ENCODE measurements at regions of chr1 and their contacts with region 1.

Region 1: DNA sequence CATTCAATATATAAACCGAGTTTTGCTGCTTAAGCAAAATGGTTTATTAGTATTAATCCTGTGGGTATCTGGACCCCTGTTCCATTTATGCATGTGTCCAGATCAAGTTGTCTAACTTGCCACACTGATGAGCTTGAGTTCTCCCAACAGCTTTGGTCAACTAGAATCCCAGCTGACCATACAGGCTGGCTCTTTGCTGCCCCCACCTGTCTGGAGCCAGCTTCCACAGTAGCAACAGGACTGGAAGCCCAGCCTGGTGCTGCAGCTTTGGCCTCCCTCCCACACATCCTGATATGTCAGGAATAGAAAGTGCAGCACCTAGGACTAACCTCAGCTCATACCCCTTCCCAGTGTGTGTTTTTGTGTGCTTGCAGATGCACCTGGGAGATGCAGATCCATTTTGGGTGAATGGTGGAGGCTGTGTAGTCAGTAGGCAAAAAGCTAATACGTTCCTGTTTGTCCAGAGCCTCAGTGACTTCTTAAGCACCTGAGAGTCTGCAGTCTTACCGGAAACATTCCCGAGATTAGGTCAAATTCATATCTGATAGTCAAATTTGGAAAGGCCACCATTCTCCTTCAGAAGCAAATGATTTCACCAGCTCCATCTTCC is 40.9 kb upstream of the BEND5 start:
- DNase-seq: peak; percentile 18
- ATAC-seq: peak; percentile 93
- H3K4me3 ChIP-seq: no peak overlapping the region
- H3K27ac ChIP-seq: no peak overlapping the region
- H3K4me1 ChIP-seq: no peaks in the 10 kb centered on the region
- H3K27me3 ChIP-seq: no peaks in the 10 kb centered on the region
- CTCF ChIP-seq: peak; percentile 85
- EP300 ChIP-seq: no peak
- POLR2A ChIP-seq: no peak
- RAD21 ChIP-seq: 0 out of 2 replicates have a peak, but pooled peaks have one; percentile 32

Region 2: DNA sequence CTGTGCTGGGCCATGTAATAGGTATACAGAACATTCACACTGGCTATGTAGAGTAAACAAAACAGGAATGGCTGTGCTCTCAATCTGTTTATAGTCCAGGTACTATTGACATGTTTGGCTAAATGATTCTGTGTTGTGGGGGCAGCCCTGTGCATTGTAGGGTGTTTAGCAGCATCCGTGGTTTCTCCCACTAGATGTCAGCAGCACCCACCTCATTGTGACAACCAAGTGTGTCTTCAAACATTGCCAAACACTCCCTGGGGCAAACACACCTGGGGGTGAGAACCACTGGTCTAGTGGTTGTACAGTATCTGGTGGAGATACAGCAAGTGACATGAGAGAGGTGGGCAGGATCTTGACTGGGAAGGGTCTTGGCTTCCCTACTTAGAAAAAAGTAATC is 265.2 kb before region 1 on chr1:
- CTCF ChIA-PET with region 1: no interaction called
- POLR2A ChIA-PET with region 1: no interaction called
- in situ Hi-C with region 1: loop called (anchors 10 kb)
- intact Hi-C with region 1: no loop called
- DNase-seq: peak; percentile 11
- ATAC-seq: peak; percentile 88
- H3K4me3 ChIP-seq: no peak overlapping the region
- H3K27ac ChIP-seq: no peak overlapping the region
- H3K4me1 ChIP-seq: no peaks in the 10 kb centered on the region
- H3K27me3 ChIP-seq: peaks cover 0 to 3% of the 10 kb centered on the region in 2 experiments; a peak in 1 of 5 replicates
- CTCF ChIP-seq: peak; percentile 65
- EP300 ChIP-seq: no peak
- POLR2A ChIP-seq: no peak
- RAD21 ChIP-seq: no peak

Region 3: GRCh38 chr1:48677306-48678287 is 140.0 kb before region 1 on chr1:
- CTCF ChIA-PET with region 1: interaction called, 7 read pairs
- POLR2A ChIA-PET with region 1: no interaction called
- in situ Hi-C with region 1: no loop called
- intact Hi-C with region 1: loop called (anchors 1 kb)
- DNase-seq: peak; percentile 56
- ATAC-seq: peak; percentile 91
- H3K4me3 ChIP-seq: no peak overlapping the region
- H3K27ac ChIP-seq: no peak overlapping the region
- H3K4me1 ChIP-seq: no peaks in the 10 kb centered on the region
- H3K27me3 ChIP-seq: no peaks in the 10 kb centered on the region
- CTCF ChIP-seq: peak; percentile 76
- EP300 ChIP-seq: no peak
- POLR2A ChIP-seq: no peak
- RAD21 ChIP-seq: no peak

Region 4: GRCh38 chr1:48697066-48697707 is 120.4 kb before region 1 on chr1:
- CTCF ChIA-PET with region 1: no interaction called
- POLR2A ChIA-PET with region 1: no interaction called
- in situ Hi-C with region 1: no loop called
- intact Hi-C with region 1: loop called (anchors 2 kb)
- DNase-seq: peak; percentile 21
- ATAC-seq: peak; percentile 78
- H3K4me3 ChIP-seq: no peak overlapping the region
- H3K27ac ChIP-seq: no peak overlapping the region
- H3K4me1 ChIP-seq: no peaks in the 10 kb centered on the region
- H3K27me3 ChIP-seq: no peaks in the 10 kb centered on the region; a peak in 2 of 5 replicates
- CTCF ChIP-seq: peak; percentile 76
- EP300 ChIP-seq: no peak
- POLR2A ChIP-seq: no peak
- RAD21 ChIP-seq: no peak

Region 5: GRCh38 chr1:48753293-48753692 is 64.3 kb before region 1 on chr1:
- CTCF ChIA-PET with region 1: no interaction called
- POLR2A ChIA-PET with region 1: no interaction called
- in situ Hi-C with region 1: no loop called
- intact Hi-C with region 1: loop called (anchors 2 kb)
- DNase-seq: peak; percentile 43
- ATAC-seq: peak; percentile 85
- H3K4me3 ChIP-seq: no peak overlapping the region
- H3K27ac ChIP-seq: no peak overlapping the region
- H3K4me1 ChIP-seq: peaks cover 22% of the 10 kb centered on the region
- H3K27me3 ChIP-seq: no peaks in the 10 kb centered on the region
- CTCF ChIP-seq: no peak
- EP300 ChIP-seq: no peak
- POLR2A ChIP-seq: no peak
- RAD21 ChIP-seq: no peak

Region 6: DNA sequence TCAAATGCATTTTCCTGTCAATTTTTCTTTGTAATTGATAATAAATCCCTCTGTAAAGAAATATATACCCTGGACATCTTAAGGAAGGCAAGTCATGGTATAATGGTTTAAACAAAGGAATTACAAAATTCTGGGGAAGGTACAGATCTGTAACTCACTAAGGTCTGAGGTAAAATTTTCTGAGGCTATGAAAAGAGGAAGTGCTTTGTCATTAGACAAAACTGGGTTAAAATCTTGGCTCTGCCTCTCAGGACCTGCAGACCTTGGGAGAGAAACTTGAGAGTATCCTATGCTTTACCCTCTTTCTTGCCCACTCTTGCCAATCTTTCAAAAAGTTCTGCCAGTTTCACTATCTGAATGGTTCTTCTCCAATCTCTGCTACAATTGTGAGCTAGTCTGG is 14.1 kb before region 1 on chr1:
- CTCF ChIA-PET with region 1: no interaction called
- POLR2A ChIA-PET with region 1: no interaction called
- in situ Hi-C with region 1: no loop called
- intact Hi-C with region 1: no loop called
- DNase-seq: no peak
- ATAC-seq: no peak
- H3K4me3 ChIP-seq: no peak overlapping the region
- H3K27ac ChIP-seq: no peak overlapping the region
- H3K4me1 ChIP-seq: no peaks in the 10 kb centered on the region
- H3K27me3 ChIP-seq: no peaks in the 10 kb centered on the region
- CTCF ChIP-seq: no peak
- EP300 ChIP-seq: no peak
- POLR2A ChIP-seq: no peak
- RAD21 ChIP-seq: no peak

Region 7: DNA sequence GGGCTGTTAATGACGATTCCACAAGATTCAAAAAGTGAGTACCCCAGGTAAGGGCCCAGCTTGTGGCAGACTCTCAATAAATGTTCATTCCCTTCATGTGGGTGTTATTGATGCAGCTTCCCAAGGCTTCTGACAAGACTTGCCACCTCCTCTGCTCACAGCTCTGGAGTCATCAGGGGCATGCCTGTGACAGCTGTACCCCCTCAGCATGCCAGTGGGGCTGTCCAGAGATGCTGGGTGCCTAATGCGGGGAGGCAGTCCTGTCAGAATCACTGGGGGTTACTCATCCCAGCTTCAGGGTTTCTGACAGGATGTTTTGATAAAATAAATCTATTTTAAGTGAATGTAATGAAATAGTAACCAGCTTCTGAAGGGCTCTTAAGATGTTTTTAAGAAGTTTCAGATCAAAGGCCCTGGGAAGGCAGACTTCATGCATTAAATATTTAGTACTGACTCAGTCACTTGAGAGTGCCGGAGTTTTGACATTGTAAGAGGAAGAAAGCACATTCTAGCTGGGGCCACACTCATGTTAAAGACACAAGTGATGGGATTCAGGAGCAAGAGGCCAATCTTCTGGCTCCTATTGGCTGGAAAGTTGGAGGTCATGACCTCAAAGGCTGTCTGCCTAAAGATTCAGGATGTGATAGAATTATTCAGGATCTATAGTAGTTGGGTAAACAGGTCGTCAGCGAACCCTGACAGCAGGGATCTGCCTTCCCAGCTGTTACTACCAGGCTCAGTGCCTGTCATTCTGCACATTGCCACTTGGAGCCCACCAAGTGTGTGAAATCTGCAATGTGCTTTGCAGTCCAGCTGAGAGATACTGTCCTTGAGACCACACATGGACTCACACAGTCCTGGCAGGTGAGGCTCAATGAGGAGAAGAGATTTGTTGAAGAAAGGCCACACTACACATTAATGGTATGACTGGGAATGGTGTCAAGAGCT is 198.7 kb after region 1 on chr1:
- CTCF ChIA-PET with region 1: no interaction called
- POLR2A ChIA-PET with region 1: no interaction called
- in situ Hi-C with region 1: no loop called
- intact Hi-C with region 1: no loop called
- DNase-seq: no peak
- ATAC-seq: no peak; the same call in 2 of the 3 replicates
- H3K4me3 ChIP-seq: no peak overlapping the region
- H3K27ac ChIP-seq: no peak overlapping the region
- H3K4me1 ChIP-seq: no peaks in the 10 kb centered on the region
- H3K27me3 ChIP-seq: no peaks in the 10 kb centered on the region; a peak in 1 of 5 replicates
- CTCF ChIP-seq: no peak
- EP300 ChIP-seq: no peak
- POLR2A ChIP-seq: no peak
- RAD21 ChIP-seq: no peak

Measured in HepG2 (cell line).